ENCODE measurements at regions of chr21 and their contacts with region 1.

Region 1: GRCh38 chr21:29849735-29850176 is 90.0 kb downstream of the GRIK1 start:
- DNase-seq: no peak
- ATAC-seq: peak; percentile 86

Region 2: GRCh38 chr21:29085106-29085752 is 764.5 kb before region 1 on chr21:
- intact Hi-C with region 1: loop called (anchors 5 kb)
- DNase-seq: no peak
- ATAC-seq: no peak

Region 3: DNA sequence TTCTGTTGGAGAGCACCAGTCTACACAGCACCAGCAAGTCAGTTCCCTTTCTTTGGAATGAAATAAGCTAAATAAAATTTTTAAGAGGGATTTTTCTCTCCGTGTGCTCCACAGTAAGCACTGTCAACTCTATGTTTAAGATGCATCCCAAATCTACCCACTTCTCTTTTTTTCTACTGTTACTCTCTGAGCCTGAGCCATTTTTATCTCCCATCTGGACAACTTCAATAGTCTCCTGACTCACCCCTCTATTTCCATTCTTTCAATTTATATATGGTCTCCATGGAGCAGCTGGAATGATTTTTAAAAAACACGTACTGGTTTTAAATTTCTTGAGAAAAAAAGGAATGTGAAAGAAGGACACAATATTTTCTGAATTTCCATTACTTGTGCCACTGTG is 751.6 kb before region 1 on chr21:
- intact Hi-C with region 1: loop called (anchors 5 kb)
- DNase-seq: no peak
- ATAC-seq: no peak

Region 4: GRCh38 chr21:29477941-29478340 is 371.8 kb before region 1 on chr21:
- intact Hi-C with region 1: loop called (anchors 2 kb)
- DNase-seq: no peak
- ATAC-seq: no peak